K562 (cell line): ENCODE measurements at regions of chr17 and their contacts with region 1.

Region 1: DNA sequence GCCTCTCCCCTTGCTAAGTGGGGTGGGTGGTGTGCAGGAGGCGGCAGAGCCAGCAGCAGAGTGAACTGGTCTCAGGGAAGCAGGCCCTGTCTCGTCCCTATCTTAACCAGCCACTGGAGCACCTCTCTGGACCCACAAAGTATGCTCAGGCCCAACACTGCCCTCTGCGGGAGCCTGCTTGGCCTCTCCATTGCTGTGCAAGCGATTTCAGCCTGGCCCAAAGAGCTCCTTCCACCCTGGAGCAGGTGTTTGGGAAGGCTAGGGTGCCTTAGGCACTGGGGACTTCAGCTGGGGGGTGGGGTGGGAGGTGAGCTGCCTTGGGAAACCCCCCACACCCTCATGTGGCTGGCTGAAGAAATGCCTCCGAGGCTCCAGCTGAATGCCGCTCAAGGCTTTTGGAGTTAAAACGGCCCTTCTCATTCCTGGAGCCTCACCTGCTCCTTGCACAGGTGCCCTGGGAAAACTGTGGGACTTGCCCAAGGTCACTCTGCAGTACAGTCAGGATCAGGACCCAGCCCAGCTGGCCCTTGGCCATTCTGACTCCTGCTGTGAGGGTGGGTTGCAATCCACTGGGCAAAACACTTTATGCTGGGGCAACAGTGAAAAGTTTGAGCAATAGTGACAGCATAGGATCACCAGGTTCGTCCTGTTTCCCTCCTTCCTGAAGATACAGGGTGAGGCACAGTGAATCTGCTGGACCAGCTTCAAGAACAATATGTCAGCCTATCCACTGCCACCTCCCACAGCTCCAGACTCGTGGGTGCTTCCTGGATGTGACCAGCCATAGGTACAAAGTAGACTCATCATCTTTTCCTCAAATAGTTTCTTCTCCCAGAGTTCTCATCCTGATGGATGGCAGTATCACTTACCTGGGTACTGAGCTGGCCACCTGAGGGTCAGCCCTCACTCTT is 5.9 kb upstream of the UBE2O start:
- DNase-seq: peak; percentile 52 to 84 (median 70)
- ATAC-seq: peak; percentile 98
- H3K4me3 ChIP-seq: no peak overlapping the region
- H3K27ac ChIP-seq: no peak overlapping the region
- H3K4me1 ChIP-seq: peaks cover 0 to 8% of the 10 kb centered on the region in 2 experiments; a peak in 3 of 5 replicates
- H3K27me3 ChIP-seq: peaks cover 4 to 15% of the 10 kb centered on the region in 2 experiments; a peak in 2 of 5 replicates
- CTCF ChIP-seq: peak; percentile 82 to 92 (median 89)
- EP300 ChIP-seq: no peak
- POLR2A ChIP-seq: no peak
- RAD21 ChIP-seq: peak; percentile 75 to 92

Region 2: GRCh38 chr17:76304226-76305134 is 154.4 kb before region 1 on chr17:
- CTCF ChIA-PET with region 1: interaction called, 4 read pairs
- POLR2A ChIA-PET with region 1: interaction called, 3 read pairs
- in situ Hi-C with region 1: no loop called
- intact Hi-C with region 1: loop called (anchors 2 kb)
- DNase-seq: no peak
- ATAC-seq: no peak
- H3K4me3 ChIP-seq: no peak overlapping the region
- H3K27ac ChIP-seq: no peak overlapping the region
- H3K4me1 ChIP-seq: peaks cover 0 to 4% of the 10 kb centered on the region in 2 experiments; a peak in 3 of 5 replicates
- H3K27me3 ChIP-seq: no peaks in the 10 kb centered on the region
- CTCF ChIP-seq: no peak
- EP300 ChIP-seq: no peak
- POLR2A ChIP-seq: no peak
- RAD21 ChIP-seq: no peak